ENCODE measurements at regions of chr18 and their contacts with region 1.

Region 1: GRCh38 chr18:76464281-76465259 is 30.5 kb downstream of the ZNF516 start:
- DNase-seq: no peak
- ATAC-seq: no peak
- H3K4me3 ChIP-seq: no peak overlapping the region
- H3K27ac ChIP-seq: no peak overlapping the region
- H3K4me1 ChIP-seq: peaks cover 10% of the 10 kb centered on the region
- CTCF ChIP-seq: no peak
- EP300 ChIP-seq: no peak
- POLR2A ChIP-seq: no peak
- RAD21 ChIP-seq: no peak

Region 2: DNA sequence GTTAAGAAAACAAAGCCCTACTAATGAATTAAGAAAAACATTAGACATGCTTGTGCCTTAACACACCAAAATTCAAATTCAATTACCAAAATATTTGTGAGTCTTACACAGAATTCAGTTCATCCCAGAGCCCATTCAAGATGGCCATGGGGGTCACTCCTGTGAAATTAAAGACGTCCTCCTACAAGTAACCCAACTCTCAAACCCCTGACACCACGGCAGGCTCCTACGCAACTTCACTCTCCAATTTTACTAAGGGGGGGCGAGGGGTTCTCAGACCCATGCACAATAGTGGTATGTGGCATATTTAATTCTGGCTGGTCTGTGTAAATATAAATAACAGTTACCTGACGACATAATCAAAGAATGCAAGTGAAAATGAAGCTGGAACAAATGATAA is 25.5 kb after region 1 on chr18:
- CTCF ChIA-PET with region 1: no interaction called
- POLR2A ChIA-PET with region 1: interaction called, 12 read pairs
- DNase-seq: no peak
- ATAC-seq: no peak
- H3K4me3 ChIP-seq: peak overlapping the region; percentile 91; the same call in 2 of the 3 replicates
- H3K27ac ChIP-seq: no peak overlapping the region
- H3K4me1 ChIP-seq: peaks cover 16% of the 10 kb centered on the region
- CTCF ChIP-seq: no peak
- EP300 ChIP-seq: no peak
- POLR2A ChIP-seq: no peak
- RAD21 ChIP-seq: no peak